Gastrocnemius medialis (tissue), 4 donors: ENCODE measurements at regions of chr2 and their contacts with region 1.

Region 1: DNA sequence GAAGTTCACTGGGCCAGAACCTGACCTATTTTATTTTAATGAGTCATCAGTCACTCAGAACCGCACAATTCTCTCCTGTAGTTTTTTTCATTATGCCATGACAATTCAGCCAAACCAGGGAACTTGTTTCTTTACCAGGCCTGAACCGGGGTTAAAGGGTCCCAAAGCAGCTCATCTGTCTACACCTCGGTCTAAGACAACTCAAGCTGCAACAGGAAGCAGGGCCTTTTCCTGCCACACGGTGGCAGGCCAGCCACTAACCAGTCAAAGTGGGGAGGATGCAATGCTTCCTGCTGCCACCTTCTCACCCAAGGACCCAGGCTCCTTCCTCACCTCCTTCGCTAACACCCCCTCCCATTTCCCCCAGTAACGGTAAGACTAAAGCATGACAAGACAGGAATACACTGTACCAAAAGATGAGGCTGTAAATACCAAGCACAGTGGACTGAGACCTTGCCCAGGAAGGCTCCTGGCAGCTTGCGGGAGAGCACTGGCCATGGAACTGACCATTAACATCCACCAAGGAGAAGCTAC is 56.7 kb upstream of the ACKR3 start:
- DNase-seq: peak in 1 of 2 donors; percentile 46
- ATAC-seq: peak; percentile 52 to 66
- H3K4me3 ChIP-seq: no peak overlapping the region
- H3K27ac ChIP-seq: no peak overlapping the region
- H3K4me1 ChIP-seq: peaks cover 0 to 3% of the 10 kb centered on the region in 2 donors
- H3K27me3 ChIP-seq: peaks cover 0 to 11% (median 3%) of the 10 kb centered on the region in 3 donors
- CTCF ChIP-seq: peak; percentile 68 to 84 (median 82)
- POLR2A ChIP-seq: no peak

Region 2: DNA sequence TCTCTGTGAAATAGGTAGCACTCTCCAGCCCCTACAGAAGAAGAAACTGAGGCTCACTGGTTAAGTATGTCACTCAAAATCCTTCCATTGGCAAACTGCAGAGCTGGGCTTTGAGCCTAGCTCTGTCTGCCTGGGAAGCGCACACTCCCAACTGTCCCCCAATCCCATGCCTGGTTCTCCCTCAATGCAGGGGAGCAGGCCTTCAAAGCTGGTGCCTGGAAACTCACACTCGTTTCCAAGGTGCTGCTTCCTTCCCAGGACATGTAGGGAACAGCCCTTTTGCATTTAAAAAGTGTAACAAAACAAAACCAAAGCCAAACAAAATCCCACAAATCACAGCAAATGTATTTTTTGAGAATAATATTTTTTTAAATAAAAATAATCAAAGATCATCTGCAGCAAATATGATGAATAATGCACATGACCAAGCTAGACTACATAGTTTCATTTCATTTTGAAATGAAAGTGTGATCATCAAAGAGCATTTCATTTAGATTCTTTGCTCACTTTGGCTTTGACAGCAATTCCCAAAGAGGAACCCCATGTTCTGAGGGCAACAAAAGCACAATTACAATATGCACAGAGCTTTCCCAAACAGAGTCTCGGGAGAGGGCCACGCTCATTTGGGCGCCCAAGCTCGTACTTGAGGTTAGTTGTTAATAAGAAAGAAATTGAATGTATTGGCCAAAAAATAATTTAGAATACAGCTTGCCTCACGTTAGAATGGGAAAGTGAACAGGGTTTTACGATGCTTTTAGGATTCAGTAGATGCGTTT is 40.1 kb before region 1 on chr2:
- in situ Hi-C with region 1: no loop called
- intact Hi-C with region 1: no loop called
- DNase-seq: no peak
- ATAC-seq: no peak
- H3K4me3 ChIP-seq: no peak overlapping the region
- H3K27ac ChIP-seq: no peak overlapping the region
- H3K4me1 ChIP-seq: no peaks in the 10 kb centered on the region
- H3K27me3 ChIP-seq: no peaks in the 10 kb centered on the region
- CTCF ChIP-seq: no peak
- POLR2A ChIP-seq: no peak

Region 3: GRCh38 chr2:236576087-236576486 is 63.1 kb after region 1 on chr2:
- in situ Hi-C with region 1: no loop called
- intact Hi-C with region 1: no loop called
- DNase-seq: no peak
- ATAC-seq: no peak
- H3K4me3 ChIP-seq: no peak overlapping the region
- H3K27ac ChIP-seq: peak overlapping the region in 3 of 4 donors; percentile 51 to 76 (median 53)
- H3K4me1 ChIP-seq: peaks cover 17 to 46% of the 10 kb centered on the region in 2 donors
- H3K27me3 ChIP-seq: no peaks in the 10 kb centered on the region
- CTCF ChIP-seq: no peak
- POLR2A ChIP-seq: no peak

Region 4: GRCh38 chr2:236610991-236611822 is 98.2 kb after region 1 on chr2:
- in situ Hi-C with region 1: no loop called
- intact Hi-C with region 1: no loop called
- DNase-seq: no peak
- ATAC-seq: no peak
- H3K4me3 ChIP-seq: no peak overlapping the region
- H3K27ac ChIP-seq: no peak overlapping the region
- H3K4me1 ChIP-seq: peaks cover 8 to 16% of the 10 kb centered on the region in 2 donors
- H3K27me3 ChIP-seq: no peaks in the 10 kb centered on the region
- CTCF ChIP-seq: no peak
- POLR2A ChIP-seq: no peak

Region 5: DNA sequence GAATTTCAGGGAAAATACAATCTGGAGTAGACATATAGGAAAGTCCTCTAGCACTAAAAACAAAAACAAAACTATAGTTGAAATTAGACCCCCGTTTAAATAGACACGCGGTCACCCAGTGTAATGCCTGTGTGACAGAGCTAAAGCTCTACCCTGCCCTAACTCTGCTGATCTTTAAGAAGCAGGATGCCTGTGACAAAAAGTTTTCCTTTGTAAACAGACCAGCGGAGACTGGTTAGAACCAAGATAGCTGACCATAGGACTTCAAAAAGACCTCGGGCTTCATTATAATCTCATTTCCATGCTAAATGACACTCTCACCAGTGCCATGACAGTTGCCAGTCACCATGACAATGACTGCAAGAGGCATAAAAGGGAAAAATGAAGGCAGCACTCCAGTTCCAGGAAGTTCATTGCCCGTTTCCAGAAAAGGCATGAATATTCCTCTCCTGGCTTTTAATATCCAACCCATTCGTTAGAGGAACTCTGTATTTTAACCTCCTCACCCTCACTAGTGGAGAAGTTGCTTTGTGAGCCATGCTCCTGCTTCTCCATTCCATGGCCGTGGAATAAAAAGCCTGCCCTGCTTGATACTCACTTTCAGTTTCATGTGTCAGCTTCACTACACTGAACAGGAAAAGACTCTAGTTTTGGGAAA is 415.5 kb after region 1 on chr2:
- in situ Hi-C with region 1: no loop called
- intact Hi-C with region 1: loop called (anchors 10 kb)
- DNase-seq: no peak
- ATAC-seq: peak; percentile 30 to 64
- H3K4me3 ChIP-seq: peak overlapping the region; percentile 30 to 42 (median 36)
- H3K27ac ChIP-seq: peak overlapping the region in 2 of 4 donors; percentile 9 to 16
- H3K4me1 ChIP-seq: peaks cover 0 to 4% of the 10 kb centered on the region in 2 donors
- H3K27me3 ChIP-seq: no peaks in the 10 kb centered on the region
- CTCF ChIP-seq: no peak
- POLR2A ChIP-seq: no peak

Region 6: GRCh38 chr2:237026981-237027711 is 514.2 kb after region 1 on chr2:
- in situ Hi-C with region 1: loop called (anchors 10 kb)
- intact Hi-C with region 1: loop called (anchors 1 kb)
- DNase-seq: peak; percentile 54 to 73
- ATAC-seq: peak; percentile 69 to 88
- H3K4me3 ChIP-seq: no peak overlapping the region
- H3K27ac ChIP-seq: no peak overlapping the region
- H3K4me1 ChIP-seq: no peaks in the 10 kb centered on the region
- H3K27me3 ChIP-seq: no peaks in the 10 kb centered on the region
- CTCF ChIP-seq: peak; percentile 81 to 91 (median 83)
- POLR2A ChIP-seq: no peak

Region 7: DNA sequence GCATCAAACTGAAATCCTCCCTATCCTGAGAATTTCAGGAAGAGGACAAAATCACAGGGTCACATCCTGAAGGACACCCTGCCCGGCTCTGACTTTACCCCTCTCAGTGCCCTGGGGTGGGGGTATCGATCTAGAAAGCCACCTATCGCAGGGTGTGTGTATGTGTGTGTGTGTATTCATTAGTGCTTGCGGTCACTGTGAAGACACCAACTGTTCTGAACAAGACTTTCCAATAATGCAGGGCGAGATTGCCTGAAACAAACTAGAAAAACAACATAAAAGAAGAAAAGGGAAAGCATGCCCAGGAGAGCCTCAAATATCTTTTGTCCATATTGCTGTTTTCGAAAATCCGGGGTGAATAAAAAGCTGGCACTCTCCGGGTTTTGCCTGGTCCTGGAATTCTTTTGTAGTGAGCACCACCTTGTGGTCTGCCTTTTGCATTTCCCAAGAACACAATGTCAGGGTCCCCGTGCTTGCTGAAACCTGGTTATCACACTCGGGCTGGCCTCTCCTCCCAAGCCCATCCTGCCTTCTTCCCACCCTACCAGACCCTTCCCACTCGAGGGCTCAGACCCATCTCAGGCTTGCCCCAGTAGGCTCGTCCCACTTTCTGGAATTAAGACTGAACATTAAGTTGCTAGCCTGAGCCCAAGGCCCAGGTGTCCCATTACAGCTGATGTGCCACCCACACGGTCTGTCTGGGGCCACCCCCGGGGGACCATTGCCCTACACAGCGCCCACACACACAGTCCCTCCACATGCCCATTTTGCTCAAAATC is 547.8 kb after region 1 on chr2:
- in situ Hi-C with region 1: loop called in 1 of 4 experiments (anchors 10 kb)
- intact Hi-C with region 1: loop called (anchors 1 kb)
- DNase-seq: no peak
- ATAC-seq: peak; percentile 70 to 74
- H3K4me3 ChIP-seq: no peak overlapping the region
- H3K27ac ChIP-seq: no peak overlapping the region
- H3K4me1 ChIP-seq: peaks cover 0 to 2% of the 10 kb centered on the region in 2 donors
- H3K27me3 ChIP-seq: no peaks in the 10 kb centered on the region
- CTCF ChIP-seq: peak; percentile 49 to 65 (median 58)
- POLR2A ChIP-seq: no peak